Body of pancreas (tissue), 4 donors: ENCODE measurements at regions of chr2 and their contacts with region 1.

Region 1: GRCh38 chr2:197416268-197416667 is 18.6 kb downstream of the SF3B1 start:
- DNase-seq: no peak
- ATAC-seq: no peak
- H3K4me3 ChIP-seq: no peak overlapping the region
- H3K27ac ChIP-seq: no peak overlapping the region
- H3K4me1 ChIP-seq: no peaks in the 10 kb centered on the region
- H3K27me3 ChIP-seq: no peaks in the 10 kb centered on the region
- CTCF ChIP-seq: no peak
- POLR2A ChIP-seq: no peak

Region 2: GRCh38 chr2:196783431-196784094 is 632.7 kb before region 1 on chr2:
- intact Hi-C with region 1: loop called (anchors 10 kb)
- DNase-seq: no peak
- ATAC-seq: no peak
- H3K4me3 ChIP-seq: no peak overlapping the region
- H3K27ac ChIP-seq: no peak overlapping the region
- H3K4me1 ChIP-seq: no peaks in the 10 kb centered on the region
- H3K27me3 ChIP-seq: no peaks in the 10 kb centered on the region
- CTCF ChIP-seq: no peak
- POLR2A ChIP-seq: no peak

Region 3: GRCh38 chr2:197286805-197287598 is 129.3 kb before region 1 on chr2:
- intact Hi-C with region 1: no loop called
- DNase-seq: peak; percentile 19 to 74 (median 44)
- ATAC-seq: peak; percentile 53
- H3K4me3 ChIP-seq: no peak overlapping the region
- H3K27ac ChIP-seq: no peak overlapping the region
- H3K4me1 ChIP-seq: no peaks in the 10 kb centered on the region
- H3K27me3 ChIP-seq: no peaks in the 10 kb centered on the region
- CTCF ChIP-seq: no peak
- POLR2A ChIP-seq: no peak